Dorsolateral prefrontal cortex (tissue), 120 donors: ENCODE measurements at regions of chr1 and their contacts with region 1.

Region 1: DNA sequence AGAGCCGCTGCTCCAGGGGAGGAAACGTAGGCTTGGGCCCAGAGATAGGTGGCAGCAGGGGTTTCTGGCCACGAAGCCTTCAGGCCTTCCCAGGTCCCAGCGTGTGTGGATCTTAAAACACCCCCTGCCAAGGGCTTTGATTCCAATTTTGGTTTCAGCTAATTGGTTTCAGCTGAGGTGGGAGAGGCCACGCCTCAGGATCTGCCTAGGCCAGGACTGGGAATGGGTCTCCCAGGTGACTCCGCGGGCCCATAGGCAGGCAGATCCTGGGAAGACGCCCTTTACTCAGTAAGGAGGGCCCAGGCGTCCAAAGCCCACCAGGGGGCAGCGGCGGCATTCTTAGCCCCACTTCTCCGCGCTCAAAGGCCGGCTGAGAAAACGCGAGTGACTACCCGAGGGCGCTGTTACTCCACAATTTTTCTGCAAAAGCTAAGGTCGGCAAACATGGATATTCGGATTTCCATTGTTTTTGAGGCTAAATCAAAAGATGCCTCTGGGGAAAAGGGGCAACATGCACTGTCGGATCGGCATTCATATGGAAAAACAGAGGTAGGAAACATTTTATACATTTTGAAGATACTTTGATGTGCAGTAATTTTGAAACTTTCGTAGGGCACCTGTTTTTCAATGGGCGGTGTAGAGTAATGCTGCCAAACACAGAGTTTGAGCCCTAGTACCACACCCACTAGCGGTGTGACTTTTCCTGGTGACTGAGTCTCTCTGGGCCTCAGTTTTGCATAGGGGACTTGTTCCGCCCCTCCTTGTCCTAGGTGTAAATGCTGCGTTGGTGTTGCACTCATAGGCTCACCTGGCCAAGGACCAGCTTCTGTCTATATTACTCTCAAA is 31.8 kb upstream of the BCL10 start:
- DNase-seq: peak; percentile 60 to 89 (median 83)
- H3K4me3 ChIP-seq: peak overlapping the region in 35 of 59 donors; percentile 2 to 51 (median 25)
- H3K27ac ChIP-seq: no peak overlapping the region
- H3K27me3 ChIP-seq: peaks cover 0 to 4% (median 0%) of the 10 kb centered on the region in 45 donors
- CTCF ChIP-seq: peak; percentile 75 to 99 (median 93)

Region 2: DNA sequence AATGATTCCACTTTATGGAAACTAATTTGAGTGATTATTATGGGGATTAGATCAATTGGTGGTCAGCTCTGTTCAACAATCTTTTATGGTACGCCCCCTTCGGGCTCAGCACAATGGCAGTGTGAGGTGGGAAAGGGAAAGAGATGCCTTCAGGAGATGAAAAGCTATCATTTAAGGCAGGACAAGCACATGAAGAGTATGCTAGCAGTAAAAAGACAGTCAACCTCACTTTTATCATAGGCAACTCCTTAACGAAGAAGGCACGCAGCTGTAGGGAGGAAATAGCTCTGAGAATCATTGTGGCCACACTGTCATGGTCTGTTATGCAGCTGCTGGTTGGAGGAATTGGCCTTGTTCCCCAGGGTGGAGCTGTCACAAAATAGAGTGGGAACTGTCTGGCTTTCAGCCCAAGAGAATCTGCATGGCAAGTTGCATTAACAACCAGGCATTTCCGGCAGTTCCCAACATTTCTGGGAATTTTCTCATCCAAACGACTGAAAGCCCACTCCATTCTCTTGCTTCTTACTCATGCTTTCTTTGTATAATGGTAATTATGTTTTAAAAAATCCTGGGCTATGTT is 22.6 kb after region 1 on chr1:
- intact Hi-C with region 1: no loop called
- DNase-seq: peak in 2 of 10 donors; percentile 20 to 22
- H3K4me3 ChIP-seq: no peak overlapping the region
- H3K27ac ChIP-seq: peak overlapping the region in 28 of 59 donors; percentile 0 to 70 (median 30)
- H3K27me3 ChIP-seq: no peaks in the 10 kb centered on the region
- CTCF ChIP-seq: no peak

Region 3: DNA sequence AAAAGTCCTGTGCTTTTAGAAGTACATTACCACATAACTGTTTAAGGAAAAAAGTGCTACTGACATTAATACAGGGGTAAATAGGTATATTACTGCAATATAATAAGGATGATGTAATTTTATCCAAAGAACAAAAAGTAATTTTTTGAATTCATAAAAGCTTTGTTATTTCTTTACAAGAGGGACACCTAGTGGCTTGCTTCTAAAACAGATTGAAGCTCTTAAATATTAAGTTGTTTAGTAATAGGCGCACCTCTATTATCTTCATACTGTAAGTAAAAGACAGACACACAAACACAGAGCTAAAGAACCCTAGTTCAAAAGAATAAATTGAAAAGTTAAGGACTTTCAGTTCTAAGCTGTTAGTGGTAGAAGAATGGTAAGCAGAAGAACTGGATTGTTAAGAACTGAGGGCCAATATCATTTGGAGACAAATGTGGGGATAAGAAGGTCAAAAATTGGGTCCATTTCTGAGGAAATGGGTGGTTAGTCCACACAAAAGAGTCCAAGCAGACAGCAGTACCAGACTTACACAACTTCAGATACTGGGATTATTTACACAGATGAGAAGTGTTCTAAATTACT is 384.6 kb after region 1 on chr1:
- intact Hi-C with region 1: loop called (anchors 5 kb)
- DNase-seq: no peak
- H3K4me3 ChIP-seq: no peak overlapping the region
- H3K27ac ChIP-seq: peak overlapping the region in 1 of 59 donors; percentile 14
- H3K27me3 ChIP-seq: no peaks in the 10 kb centered on the region
- CTCF ChIP-seq: peak in 54 of 56 donors; percentile 31 to 75 (median 56)

Region 4: DNA sequence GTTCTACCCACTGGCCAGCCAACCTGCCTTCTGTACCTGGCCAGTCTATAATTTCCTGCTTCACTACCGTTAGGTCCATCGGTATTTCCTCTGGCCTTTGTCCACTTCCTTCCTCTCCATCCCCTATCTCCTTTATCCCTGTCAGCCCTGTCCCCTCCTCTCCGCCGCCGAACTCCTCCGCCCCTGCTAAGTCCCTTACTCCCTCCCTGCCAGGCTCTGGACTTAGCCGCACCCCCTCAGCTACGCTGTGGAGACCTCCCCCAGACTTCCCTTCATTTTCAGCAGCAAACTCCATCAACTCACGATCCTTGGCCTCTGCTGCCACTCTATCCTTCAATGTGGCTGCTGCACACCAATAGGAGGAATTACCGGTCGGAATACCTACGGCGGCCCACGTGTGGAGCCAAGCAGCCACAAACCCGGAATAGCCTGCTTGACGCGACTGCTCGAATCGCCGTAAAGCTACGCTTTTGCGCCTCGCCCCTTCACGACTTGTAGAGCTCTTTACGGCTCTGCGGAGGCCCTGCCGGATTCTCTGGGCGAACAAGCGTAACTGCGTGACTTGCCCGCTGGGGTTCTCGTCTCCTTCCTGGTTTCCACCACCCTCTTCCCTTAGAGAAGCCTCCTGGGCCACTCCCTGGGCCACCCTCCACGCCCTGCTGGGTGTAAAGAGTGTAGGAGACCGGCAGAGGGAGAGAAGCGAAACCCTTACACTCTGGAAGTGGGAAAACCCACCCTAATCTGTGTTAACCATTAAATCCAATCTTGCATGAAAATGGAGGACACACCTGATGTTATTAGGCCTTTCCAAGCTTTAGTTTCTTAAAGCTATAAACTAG is 400.0 kb after region 1 on chr1 and contains the start of gene ZNHIT6:
- intact Hi-C with region 1: loop called in 1 of 2 experiments (anchors 5 kb)
- DNase-seq: peak; percentile 69 to 95 (median 90)
- H3K4me3 ChIP-seq: peak within 1 kb of the TSS; percentile 61 to 98 (median 86)
- H3K27ac ChIP-seq: peak within 1 kb of the TSS in 58 of 59 donors; percentile 71 to 98 (median 92)
- H3K27me3 ChIP-seq: no peaks in the 10 kb centered on the region
- CTCF ChIP-seq: peak in 41 of 56 donors; percentile 4 to 57 (median 35)
- total RNA-seq, gene ZNHIT6: 18.2 to 31.5 (median 22.8) TPM